OCI-LY7 (cell line): ENCODE measurements at regions of chr6 and their contacts with region 1.

Region 1: GRCh38 chr6:28895134-28895812 is 28.5 kb downstream of the TRIM27 start:
- DNase-seq: peak; percentile 97
- H3K4me3 ChIP-seq: peak overlapping the region; percentile 92
- H3K27ac ChIP-seq: peak overlapping the region; percentile 92
- H3K4me1 ChIP-seq: peaks cover 18% of the 10 kb centered on the region
- CTCF ChIP-seq: no peak

Region 2: GRCh38 chr6:28863604-28864320 is 31.5 kb before region 1 on chr6:
- CTCF ChIA-PET with region 1: no interaction called
- POLR2A ChIA-PET with region 1: interaction called, 16 read pairs
- intact Hi-C with region 1: loop called (anchors 1 kb)
- DNase-seq: peak; percentile 79
- H3K4me3 ChIP-seq: peak overlapping the region; percentile 80
- H3K27ac ChIP-seq: peak overlapping the region; percentile 37
- H3K4me1 ChIP-seq: peaks cover 37% of the 10 kb centered on the region
- CTCF ChIP-seq: no peak

Region 3: DNA sequence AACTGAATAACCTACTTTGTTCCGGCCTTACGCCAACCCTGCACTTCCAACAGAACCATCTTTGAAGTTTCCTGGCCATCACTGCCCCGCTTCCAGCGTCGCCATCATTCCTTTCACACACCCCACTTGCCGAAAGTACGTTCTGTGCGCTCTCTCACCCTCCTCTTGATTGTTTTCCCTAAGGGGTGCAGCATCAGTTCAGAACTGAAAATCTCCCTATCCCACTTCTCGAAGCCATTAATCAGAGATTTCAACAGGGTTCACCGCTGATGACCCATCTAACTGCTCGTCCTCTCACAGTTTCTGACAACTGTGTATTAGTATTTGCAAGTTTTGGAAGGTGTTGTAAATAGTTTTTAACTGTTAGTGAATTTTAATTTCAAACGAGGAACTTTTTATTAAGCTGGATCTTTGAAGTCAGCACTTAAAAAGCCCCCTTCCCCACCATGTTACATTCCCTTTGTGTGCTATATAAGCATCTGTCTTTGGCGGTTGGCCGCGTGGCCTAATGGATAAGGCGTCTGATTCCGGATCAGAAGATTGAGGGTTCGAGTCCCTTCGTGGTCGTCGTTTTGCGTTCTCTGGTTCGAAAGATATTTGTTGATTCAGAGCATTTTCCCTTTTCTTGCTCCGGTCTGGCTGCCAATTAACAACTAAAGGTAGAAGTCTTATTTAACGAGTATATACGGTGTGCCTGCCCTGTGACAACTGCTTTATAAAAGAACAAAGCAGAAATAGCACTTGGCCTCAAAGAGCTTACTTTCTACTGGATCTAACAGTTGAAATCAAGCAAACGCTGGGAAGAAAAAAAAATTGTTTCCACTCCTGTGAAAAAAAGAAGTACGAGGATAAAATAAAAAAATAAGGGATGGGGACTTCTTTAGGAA is 14.1 kb before region 1 on chr6:
- CTCF ChIA-PET with region 1: interaction called, 4 read pairs
- POLR2A ChIA-PET with region 1: interaction called, 70 read pairs
- intact Hi-C with region 1: loop called (anchors 1 kb)
- DNase-seq: peak; percentile 72
- H3K4me3 ChIP-seq: peak overlapping the region; percentile 50
- H3K27ac ChIP-seq: peak overlapping the region; percentile 61
- H3K4me1 ChIP-seq: peaks cover 64% of the 10 kb centered on the region
- CTCF ChIP-seq: no peak

Region 4: DNA sequence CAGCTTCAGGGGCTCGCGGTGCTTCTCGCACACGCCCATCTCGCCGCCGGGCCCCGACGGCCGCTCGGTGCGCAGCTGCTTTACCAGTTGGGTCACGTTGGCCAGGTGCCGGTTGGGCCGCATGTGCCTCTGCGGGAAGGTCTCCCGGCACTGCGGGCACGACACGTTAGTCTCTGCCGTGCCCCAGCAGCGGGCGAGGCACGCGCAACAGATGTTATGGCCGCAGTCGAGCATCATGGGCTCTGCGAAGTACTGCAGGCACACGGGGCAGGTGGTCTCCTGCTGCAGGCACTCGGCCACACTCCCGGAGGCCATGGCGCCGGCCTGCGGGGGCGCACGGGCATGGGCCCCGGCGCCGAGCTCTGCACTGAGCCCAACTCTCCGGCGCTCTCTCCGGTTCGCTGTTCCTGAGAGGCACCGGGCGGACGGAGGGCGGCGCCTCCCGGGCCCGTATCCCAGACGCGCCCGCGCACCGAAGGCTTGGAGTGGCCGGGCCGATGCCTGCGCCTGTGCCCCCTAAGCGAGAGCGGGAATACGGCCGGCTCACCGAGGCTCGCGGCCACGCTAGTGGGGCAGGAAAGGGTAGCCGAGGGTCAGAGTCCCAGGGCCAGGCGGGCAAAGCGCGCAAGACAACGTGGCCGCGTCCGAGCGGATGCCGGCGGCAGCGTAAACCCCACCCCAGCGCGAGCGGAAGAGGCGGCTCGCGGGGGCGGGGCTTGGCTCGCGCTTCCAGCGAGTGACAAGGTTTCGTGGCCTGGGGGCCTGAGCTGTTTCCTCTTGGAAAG is 28.2 kb after region 1 on chr6 and contains the start of gene TRIM27:
- CTCF ChIA-PET with region 1: no interaction called
- POLR2A ChIA-PET with region 1: interaction called, 7 read pairs
- intact Hi-C with region 1: loop called (anchors 2 kb)
- DNase-seq: peak; percentile 91
- H3K4me3 ChIP-seq: peak within 1 kb of the TSS; percentile 93
- H3K27ac ChIP-seq: peak within 1 kb of the TSS; percentile 73
- H3K4me1 ChIP-seq: peaks cover 26% of the 10 kb centered on the region
- CTCF ChIP-seq: 0 out of 2 replicates have a peak, but pooled peaks have one; percentile 18
- total RNA-seq, gene TRIM27: 126 and 130 TPM in 2 replicates

Region 5: GRCh38 chr6:28981833-28982475 is 86.7 kb after region 1 on chr6:
- CTCF ChIA-PET with region 1: no interaction called
- POLR2A ChIA-PET with region 1: no interaction called
- intact Hi-C with region 1: loop called (anchors 1 kb)
- DNase-seq: peak; percentile 84
- H3K4me3 ChIP-seq: peak overlapping the region; percentile 98
- H3K27ac ChIP-seq: peak overlapping the region; percentile 37
- H3K4me1 ChIP-seq: peaks cover 22% of the 10 kb centered on the region
- CTCF ChIP-seq: 0 out of 2 replicates have a peak, but pooled peaks have one; percentile 26

Region 6: DNA sequence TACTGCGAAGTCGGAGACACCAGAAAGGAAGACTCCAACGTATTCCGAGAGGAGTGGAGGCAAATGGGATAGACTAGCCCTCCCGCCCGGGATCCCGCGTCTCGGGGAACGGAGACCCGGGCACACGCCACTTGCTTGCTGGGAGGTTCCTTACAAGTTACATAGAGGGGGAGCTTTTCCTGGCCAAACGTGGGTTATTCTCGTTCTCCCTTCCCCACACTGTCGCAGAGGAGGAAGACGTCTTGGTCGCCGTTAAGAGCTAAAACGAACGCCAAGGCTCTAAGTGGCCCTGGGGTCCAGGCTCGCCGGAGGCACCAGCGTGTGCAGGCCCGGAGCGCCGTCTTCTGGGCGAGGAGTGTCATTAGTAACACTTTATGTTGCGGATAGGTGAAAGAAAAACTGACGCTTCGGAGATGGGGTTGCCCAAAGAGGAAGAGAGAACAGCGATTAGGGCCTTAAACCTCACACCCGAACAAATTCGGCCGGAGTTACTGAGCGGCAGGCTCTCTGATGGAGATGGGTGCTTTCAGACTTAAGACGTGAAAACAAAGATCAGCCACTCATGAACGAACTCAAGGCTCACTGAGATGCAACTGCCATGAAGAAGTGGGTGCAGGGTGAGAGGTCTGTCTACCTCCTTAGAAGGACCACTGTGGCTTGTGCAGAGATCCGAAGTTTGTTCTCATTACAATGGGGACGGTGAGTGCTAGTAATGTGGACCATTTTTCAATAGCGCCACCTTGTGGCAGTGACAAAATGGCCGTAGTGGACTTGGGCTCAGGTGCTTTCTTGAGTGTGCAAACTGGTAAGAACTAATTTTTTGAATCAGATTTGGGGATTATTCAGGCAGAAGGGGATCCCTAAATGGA is 121.5 kb after region 1 on chr6:
- CTCF ChIA-PET with region 1: no interaction called
- POLR2A ChIA-PET with region 1: no interaction called
- intact Hi-C with region 1: loop called (anchors 1 kb)
- DNase-seq: peak; percentile 90
- H3K4me3 ChIP-seq: peak overlapping the region; percentile 67
- H3K27ac ChIP-seq: peak overlapping the region; percentile 56
- H3K4me1 ChIP-seq: no peaks in the 10 kb centered on the region
- CTCF ChIP-seq: peak; percentile 97